Heart left ventricle (tissue), 16 donors: ENCODE measurements at regions of chr2 and their contacts with region 1.

Region 1: GRCh38 chr2:231612179-231613053 is 19.8 kb downstream of the TEX44 start:
- DNase-seq: peak; percentile 91 to 95 (median 92)
- ATAC-seq: peak; percentile 65 to 79 (median 72)
- H3K4me3 ChIP-seq: peak overlapping the region in 1 of 12 donors; percentile 14
- H3K27ac ChIP-seq: peak overlapping the region; percentile 91 to 100 (median 98)
- H3K4me1 ChIP-seq: peaks cover 16 to 54% (median 35%) of the 10 kb centered on the region in 12 donors
- H3K27me3 ChIP-seq: peaks cover 0 to 8% (median 0%) of the 10 kb centered on the region in 9 donors
- CTCF ChIP-seq: peak; percentile 93 to 99 (median 98)
- POLR2A ChIP-seq: no peak

Region 2: GRCh38 chr2:231642631-231643494 is 30.4 kb after region 1 on chr2:
- intact Hi-C with region 1: loop called in 9 of 10 experiments (anchors 1 to 2 kb)
- DNase-seq: peak; percentile 89 to 94 (median 92)
- ATAC-seq: peak; percentile 92 to 97 (median 96)
- H3K4me3 ChIP-seq: peak overlapping the region in 9 of 12 donors; percentile 2 to 53 (median 39)
- H3K27ac ChIP-seq: peak overlapping the region; percentile 83 to 100 (median 94)
- H3K4me1 ChIP-seq: peaks cover 9 to 71% (median 48%) of the 10 kb centered on the region in 12 donors
- H3K27me3 ChIP-seq: no peaks in the 10 kb centered on the region
- CTCF ChIP-seq: peak in 3 of 12 donors; percentile 4 to 16 (median 10)
- POLR2A ChIP-seq: peak; percentile 5 to 71

Region 3: GRCh38 chr2:231662028-231662810 is 49.8 kb after region 1 on chr2:
- intact Hi-C with region 1: loop called in 2 of 10 experiments (anchors 1 to 2 kb)
- DNase-seq: peak; percentile 95 to 99 (median 97)
- ATAC-seq: peak; percentile 56 to 80 (median 72)
- H3K4me3 ChIP-seq: peak overlapping the region in 11 of 12 donors; percentile 19 to 65 (median 49)
- H3K27ac ChIP-seq: peak overlapping the region; percentile 93 to 100 (median 96)
- H3K4me1 ChIP-seq: peaks cover 0 to 41% (median 27%) of the 10 kb centered on the region in 12 donors
- H3K27me3 ChIP-seq: no peaks in the 10 kb centered on the region
- CTCF ChIP-seq: peak in 1 of 12 donors; percentile 5
- POLR2A ChIP-seq: peak; percentile 58 to 71

Region 4: GRCh38 chr2:231674587-231675338 is 62.3 kb after region 1 on chr2:
- intact Hi-C with region 1: loop called (anchors 1 to 2 kb)
- DNase-seq: peak; percentile 71 to 86 (median 76)
- ATAC-seq: peak in 3 of 4 donors; percentile 41 to 58 (median 57)
- H3K4me3 ChIP-seq: no peak overlapping the region
- H3K27ac ChIP-seq: peak overlapping the region; percentile 70 to 98 (median 88)
- H3K4me1 ChIP-seq: peaks cover 5 to 58% (median 46%) of the 10 kb centered on the region in 12 donors
- H3K27me3 ChIP-seq: no peaks in the 10 kb centered on the region
- CTCF ChIP-seq: peak; percentile 75 to 95 (median 86)
- POLR2A ChIP-seq: no peak

Region 5: GRCh38 chr2:231780909-231781797 is 168.7 kb after region 1 on chr2 and contains the start of gene PDE6D:
- intact Hi-C with region 1: loop called in 4 of 10 experiments (anchors 5 to 10 kb)
- DNase-seq: peak; percentile 98 to 100 (median 99)
- ATAC-seq: peak; percentile 95 to 97 (median 96)
- H3K4me3 ChIP-seq: peak within 1 kb of the TSS; percentile 59 to 95 (median 87)
- H3K27ac ChIP-seq: peak within 1 kb of the TSS; percentile 54 to 93 (median 90)
- H3K4me1 ChIP-seq: peaks cover 0 to 53% (median 30%) of the 10 kb centered on the region in 12 donors
- H3K27me3 ChIP-seq: no peaks in the 10 kb centered on the region
- CTCF ChIP-seq: no peak
- POLR2A ChIP-seq: peak; percentile 96 to 99
- total RNA-seq, gene PDE6D: 12.3 to 29.1 (median 19.5) TPM

Region 6: DNA sequence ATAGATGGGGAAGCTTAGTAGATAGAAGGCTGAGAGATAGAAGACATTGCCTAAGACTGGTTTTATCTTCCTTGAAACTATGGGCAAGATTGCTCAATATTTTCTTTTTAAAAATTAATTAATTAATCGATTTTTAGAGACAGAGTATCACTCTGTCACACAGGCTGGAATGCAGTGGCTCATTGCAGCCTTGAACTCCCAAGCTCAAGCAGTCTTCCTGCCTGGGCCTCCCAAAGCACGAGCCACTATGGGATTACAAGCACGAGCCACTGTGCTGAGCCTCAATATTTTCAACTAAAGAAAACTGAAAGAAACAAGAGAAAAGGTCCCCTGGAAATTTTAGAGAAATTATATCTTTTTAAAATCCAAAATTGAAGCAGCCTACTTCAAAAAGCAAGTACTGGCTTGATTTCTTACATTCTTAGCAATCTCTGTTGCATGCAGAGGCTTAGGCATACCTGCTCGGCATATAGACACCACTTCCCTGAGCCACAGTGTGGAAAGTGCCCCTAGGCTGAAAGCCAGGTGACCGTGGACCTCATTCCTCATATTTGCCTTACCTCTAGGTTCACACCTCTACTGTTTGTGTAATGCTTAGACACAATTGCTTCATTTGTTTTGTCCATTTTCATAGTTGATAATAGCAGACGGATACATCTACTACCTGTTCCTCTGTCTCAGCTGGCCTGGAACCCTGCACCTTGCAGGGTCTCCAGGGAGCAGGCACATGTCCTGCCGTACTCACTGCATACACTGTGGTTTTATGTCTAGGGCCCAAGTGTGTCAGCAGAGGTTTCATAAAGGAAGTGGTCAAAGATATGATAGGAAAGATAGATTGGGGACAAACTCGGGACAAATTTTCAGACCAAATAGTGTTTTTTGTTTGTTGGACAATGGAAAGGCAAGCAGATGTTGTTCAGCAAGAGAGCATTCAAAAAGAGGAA is 599.6 kb after region 1 on chr2:
- intact Hi-C with region 1: no loop called
- DNase-seq: no peak
- ATAC-seq: no peak
- H3K4me3 ChIP-seq: no peak overlapping the region
- H3K27ac ChIP-seq: no peak overlapping the region
- H3K4me1 ChIP-seq: peaks cover 0 to 4% (median 0%) of the 10 kb centered on the region in 12 donors
- H3K27me3 ChIP-seq: no peaks in the 10 kb centered on the region
- CTCF ChIP-seq: no peak
- POLR2A ChIP-seq: no peak